Activated B cell treated with CpG ODN at 0.5 μM for 24 hours (primary cell): ENCODE measurements at regions of chr6 and their contacts with region 1.

Region 1: GRCh38 chr6:33570806-33571636 is 9.1 kb downstream of the BAK1 start:
- DNase-seq: peak; percentile 81
- ATAC-seq: peak; percentile 84
- H3K4me3 Mint-ChIP-seq: peak overlapping the region; percentile 89
- H3K27ac Mint-ChIP-seq: peak overlapping the region; percentile 100
- H3K4me1 Mint-ChIP-seq: peaks cover 38% of the 10 kb centered on the region
- H3K27me3 Mint-ChIP-seq: no peaks in the 10 kb centered on the region
- CTCF ChIP-seq: no peak

Region 2: GRCh38 chr6:33317669-33318425 is 253.2 kb before region 1 on chr6 and contains the start of gene ZBTB22:
- CTCF ChIA-PET with region 1: no interaction called
- POLR2A ChIA-PET with region 1: interaction called, 7 read pairs
- intact Hi-C with region 1: loop called (anchors 1 kb)
- DNase-seq: peak; percentile 91
- ATAC-seq: peak; percentile 59
- H3K4me3 Mint-ChIP-seq: peak within 1 kb of the TSS; percentile 99
- H3K27ac Mint-ChIP-seq: peak within 1 kb of the TSS; percentile 98
- H3K4me1 Mint-ChIP-seq: peaks cover 84% of the 10 kb centered on the region
- H3K27me3 Mint-ChIP-seq: no peaks in the 10 kb centered on the region
- CTCF ChIP-seq: no peak
- total RNA-seq, gene ZBTB22: 31.6 and 31.8 TPM in 2 replicates

Region 3: GRCh38 chr6:33410050-33410710 is 160.8 kb before region 1 on chr6:
- CTCF ChIA-PET with region 1: no interaction called
- POLR2A ChIA-PET with region 1: interaction called, 12 read pairs
- intact Hi-C with region 1: loop called (anchors 1 kb)
- DNase-seq: peak; percentile 93
- ATAC-seq: peak; percentile 74
- H3K4me3 Mint-ChIP-seq: peak overlapping the region; percentile 88
- H3K27ac Mint-ChIP-seq: peak overlapping the region; percentile 87
- H3K4me1 Mint-ChIP-seq: peaks cover 47% of the 10 kb centered on the region
- H3K27me3 Mint-ChIP-seq: no peaks in the 10 kb centered on the region
- CTCF ChIP-seq: no peak

Region 4: DNA sequence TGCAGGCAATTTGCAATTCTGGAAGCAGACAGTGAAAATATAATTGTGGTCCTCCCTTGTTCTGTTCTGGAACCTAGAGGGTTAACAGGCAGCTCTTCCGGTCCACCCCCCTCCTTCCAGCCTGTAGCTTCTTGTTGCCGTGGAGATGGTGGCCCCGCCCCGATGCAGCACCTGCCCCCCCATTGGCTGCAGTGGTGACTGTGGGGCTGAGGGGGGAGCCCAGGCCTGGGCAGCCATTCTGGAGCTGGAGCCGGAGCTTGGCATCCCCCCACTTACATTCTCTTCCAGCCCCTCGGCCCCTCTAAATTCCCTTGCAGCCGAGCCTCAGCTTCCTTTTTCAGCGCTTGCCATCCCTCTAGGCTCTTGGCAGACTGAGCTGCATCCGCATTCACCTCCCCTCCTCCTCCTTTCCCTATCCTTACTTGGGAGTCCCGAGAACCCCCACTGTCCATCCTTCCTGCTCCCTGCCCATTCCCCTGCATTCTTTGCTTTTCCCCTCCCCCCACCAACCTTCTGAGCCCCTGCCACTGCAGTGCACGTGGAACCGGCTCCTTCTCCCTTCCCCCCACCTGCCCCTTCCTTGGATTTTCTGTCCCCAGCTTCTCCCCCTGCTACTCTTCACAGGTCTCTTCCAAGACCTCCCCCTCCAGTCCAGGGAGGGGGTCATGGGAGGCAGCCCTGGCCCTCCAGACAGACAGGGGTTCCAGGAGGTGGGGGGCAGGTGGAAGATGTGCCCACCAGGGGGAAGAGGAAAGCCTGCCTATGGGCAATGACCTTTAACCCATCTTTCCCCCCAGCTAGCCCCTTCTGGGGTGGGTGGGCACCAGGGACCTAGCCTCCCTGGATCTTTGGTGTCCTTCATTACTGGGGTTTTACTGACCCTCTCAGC is 139.8 kb before region 1 on chr6:
- CTCF ChIA-PET with region 1: interaction called, 3 read pairs
- POLR2A ChIA-PET with region 1: interaction called, 15 read pairs
- intact Hi-C with region 1: loop called (anchors 2 kb)
- DNase-seq: peak; percentile 69
- ATAC-seq: peak; percentile 56
- H3K4me3 Mint-ChIP-seq: peak overlapping the region; percentile 67
- H3K27ac Mint-ChIP-seq: peak overlapping the region; percentile 60
- H3K4me1 Mint-ChIP-seq: peaks cover 78% of the 10 kb centered on the region
- H3K27me3 Mint-ChIP-seq: no peaks in the 10 kb centered on the region
- CTCF ChIP-seq: no peak

Region 5: DNA sequence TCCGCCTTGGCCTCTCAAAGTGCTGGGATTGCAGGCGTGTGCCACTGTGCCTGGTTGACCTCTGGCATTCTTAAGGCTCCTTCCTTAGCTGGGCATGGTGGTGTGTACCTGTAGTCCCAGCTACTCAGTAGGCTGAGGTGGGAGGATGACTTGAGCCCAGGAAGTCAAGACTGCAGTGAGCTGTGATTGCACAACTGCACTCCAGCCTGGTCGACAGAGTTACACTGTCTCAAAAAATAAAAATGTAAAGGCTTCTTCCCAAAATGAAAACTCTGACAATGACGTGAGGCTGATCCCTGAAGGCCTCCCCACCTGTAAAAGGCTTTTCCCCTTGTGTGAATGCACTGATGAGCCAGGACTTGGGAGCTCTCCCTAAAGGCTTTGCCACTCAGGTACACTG is 54.3 kb before region 1 on chr6:
- CTCF ChIA-PET with region 1: no interaction called
- POLR2A ChIA-PET with region 1: interaction called, 12 read pairs
- intact Hi-C with region 1: no loop called
- DNase-seq: no peak
- ATAC-seq: no peak
- H3K4me3 Mint-ChIP-seq: no peak overlapping the region
- H3K27ac Mint-ChIP-seq: no peak overlapping the region
- H3K4me1 Mint-ChIP-seq: no peaks in the 10 kb centered on the region
- H3K27me3 Mint-ChIP-seq: peaks cover 9% of the 10 kb centered on the region
- CTCF ChIP-seq: no peak

Region 6: GRCh38 chr6:33620856-33621710 is 50.1 kb after region 1 on chr6 and contains the start of gene ITPR3:
- CTCF ChIA-PET with region 1: interaction called, 4 read pairs
- POLR2A ChIA-PET with region 1: interaction called, 11 read pairs
- intact Hi-C with region 1: no loop called
- DNase-seq: peak; percentile 71
- ATAC-seq: peak; percentile 85
- H3K4me3 Mint-ChIP-seq: peak within 1 kb of the TSS; percentile 89
- H3K27ac Mint-ChIP-seq: peak within 1 kb of the TSS; percentile 76
- H3K4me1 Mint-ChIP-seq: peaks cover 47% of the 10 kb centered on the region
- H3K27me3 Mint-ChIP-seq: no peaks in the 10 kb centered on the region
- CTCF ChIP-seq: no peak
- total RNA-seq, gene ITPR3: 31.7 and 35.5 TPM in 2 replicates

Region 7: GRCh38 chr6:33761922-33762629 is 191.1 kb after region 1 on chr6:
- CTCF ChIA-PET with region 1: no interaction called
- POLR2A ChIA-PET with region 1: no interaction called
- intact Hi-C with region 1: no loop called
- DNase-seq: no peak
- ATAC-seq: peak; percentile 42
- H3K4me3 Mint-ChIP-seq: no peak overlapping the region
- H3K27ac Mint-ChIP-seq: no peak overlapping the region
- H3K4me1 Mint-ChIP-seq: no peaks in the 10 kb centered on the region
- H3K27me3 Mint-ChIP-seq: peaks cover 13% of the 10 kb centered on the region
- CTCF ChIP-seq: no peak